ENCODE measurements at regions of chr22 and their contacts with region 1.

Region 1: DNA sequence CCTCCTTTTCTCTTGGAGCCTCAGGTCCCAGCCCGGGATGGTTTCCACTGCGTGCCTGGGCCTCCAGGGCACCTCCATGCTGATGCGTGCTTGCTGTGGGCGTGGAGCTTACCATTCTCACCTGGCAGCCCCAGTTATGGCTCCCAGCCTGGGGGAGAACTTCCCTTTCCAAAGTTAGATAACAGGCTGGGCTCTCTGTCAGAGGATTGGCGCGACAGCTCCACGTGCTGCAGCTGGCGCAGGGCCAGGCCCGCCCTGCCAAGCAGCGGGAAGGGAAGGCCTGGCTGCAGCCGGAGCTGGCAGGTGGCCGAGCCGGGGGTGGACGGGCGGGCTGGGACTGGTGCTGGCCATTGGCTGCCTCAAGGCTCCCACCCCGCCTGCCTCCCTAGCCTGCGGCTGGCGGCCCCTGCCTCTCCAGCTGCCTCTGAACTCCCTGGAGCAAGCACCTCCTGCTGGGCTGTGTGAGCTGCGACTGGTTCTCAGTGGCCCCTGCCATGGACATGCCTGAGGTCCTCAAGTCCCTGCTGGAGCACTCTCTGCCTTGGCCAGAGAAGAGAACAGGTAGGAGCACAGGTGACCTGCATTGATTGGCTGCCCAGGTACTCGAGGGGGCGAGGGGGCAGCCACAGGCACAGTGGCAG is 14.6 kb upstream of the TEF start:
- DNase-seq: peak; percentile 90 to 97
- ATAC-seq: peak; percentile 79 to 84
- H3K4me3 ChIP-seq: peak overlapping the region; percentile 37 to 51 (median 44)
- H3K27ac ChIP-seq: peak overlapping the region; percentile 76 to 86 (median 82)
- H3K4me1 ChIP-seq: peaks cover 26 to 44% of the 10 kb centered on the region in 2 donors
- H3K27me3 ChIP-seq: no peaks in the 10 kb centered on the region
- CTCF ChIP-seq: peak in 1 of 5 experiments; percentile 44
- POLR2A ChIP-seq: peak; percentile 13 to 30

Region 2: GRCh38 chr22:41327124-41327523 is 40.0 kb before region 1 on chr22:
- in situ Hi-C with region 1: no loop called
- intact Hi-C with region 1: loop called (anchors 5 kb)
- DNase-seq: peak; percentile 93 to 97
- ATAC-seq: peak; percentile 95 to 96
- H3K4me3 ChIP-seq: no peak overlapping the region
- H3K27ac ChIP-seq: peak overlapping the region; percentile 88 to 95 (median 92)
- H3K4me1 ChIP-seq: peaks cover 18 to 19% of the 10 kb centered on the region in 2 donors
- H3K27me3 ChIP-seq: no peaks in the 10 kb centered on the region
- CTCF ChIP-seq: peak in 4 of 5 experiments; percentile 41 to 64 (median 52)
- POLR2A ChIP-seq: peak in 1 of 2 donors; percentile 42

Measured in gastrocnemius medialis (tissue), 4 donors.